Calu3 (cell line): ENCODE measurements at regions of chr19 and their contacts with region 1.

Region 1: GRCh38 chr19:51259348-51260245 is 8.7 kb downstream of the SIGLECL1 start:
- DNase-seq: peak; percentile 75
- H3K4me3 Mint-ChIP-seq: no peak overlapping the region
- H3K27ac Mint-ChIP-seq: no peak overlapping the region
- H3K4me1 Mint-ChIP-seq: no peaks in the 10 kb centered on the region
- H3K27me3 Mint-ChIP-seq: peaks cover 64% of the 10 kb centered on the region
- CTCF ChIP-seq: peak; percentile 75

Region 2: DNA sequence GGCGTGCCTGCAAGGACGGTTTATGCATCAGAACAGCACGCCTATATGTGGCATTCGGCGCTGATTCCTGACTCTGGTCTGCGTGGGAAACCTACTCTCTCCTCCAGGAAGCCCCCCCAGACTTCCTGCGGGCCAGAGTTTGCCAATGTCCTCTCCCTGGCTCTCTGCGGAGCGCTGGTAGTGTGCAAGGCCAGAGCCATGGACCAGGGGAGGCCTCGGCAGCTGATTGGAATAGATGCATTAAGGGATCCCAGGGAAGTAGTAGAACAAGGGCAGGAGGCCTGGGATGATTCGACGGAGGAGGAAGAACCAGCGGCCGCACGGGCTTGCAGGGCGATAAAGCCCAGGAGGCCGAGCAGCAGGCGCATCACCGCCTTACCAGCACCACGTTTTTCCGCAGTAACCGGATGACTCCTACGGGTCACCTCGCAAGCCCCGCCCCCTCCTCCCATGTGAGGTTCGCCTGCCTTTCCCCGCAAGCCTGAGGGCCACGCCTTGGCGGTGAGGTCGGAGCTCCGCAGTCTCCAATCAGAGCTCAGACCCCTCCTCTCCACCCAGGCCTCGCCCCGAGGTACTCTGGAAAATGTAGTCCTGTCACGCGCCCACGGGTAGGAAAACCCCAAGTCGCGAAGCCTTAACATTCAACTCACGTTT is 531.4 kb before region 1 on chr19:
- CTCF ChIA-PET with region 1: no interaction called
- intact Hi-C with region 1: no loop called
- DNase-seq: no peak
- H3K4me3 Mint-ChIP-seq: no peak overlapping the region
- H3K27ac Mint-ChIP-seq: no peak overlapping the region
- H3K4me1 Mint-ChIP-seq: no peaks in the 10 kb centered on the region
- H3K27me3 Mint-ChIP-seq: peaks cover 63% of the 10 kb centered on the region
- CTCF ChIP-seq: no peak

Region 3: DNA sequence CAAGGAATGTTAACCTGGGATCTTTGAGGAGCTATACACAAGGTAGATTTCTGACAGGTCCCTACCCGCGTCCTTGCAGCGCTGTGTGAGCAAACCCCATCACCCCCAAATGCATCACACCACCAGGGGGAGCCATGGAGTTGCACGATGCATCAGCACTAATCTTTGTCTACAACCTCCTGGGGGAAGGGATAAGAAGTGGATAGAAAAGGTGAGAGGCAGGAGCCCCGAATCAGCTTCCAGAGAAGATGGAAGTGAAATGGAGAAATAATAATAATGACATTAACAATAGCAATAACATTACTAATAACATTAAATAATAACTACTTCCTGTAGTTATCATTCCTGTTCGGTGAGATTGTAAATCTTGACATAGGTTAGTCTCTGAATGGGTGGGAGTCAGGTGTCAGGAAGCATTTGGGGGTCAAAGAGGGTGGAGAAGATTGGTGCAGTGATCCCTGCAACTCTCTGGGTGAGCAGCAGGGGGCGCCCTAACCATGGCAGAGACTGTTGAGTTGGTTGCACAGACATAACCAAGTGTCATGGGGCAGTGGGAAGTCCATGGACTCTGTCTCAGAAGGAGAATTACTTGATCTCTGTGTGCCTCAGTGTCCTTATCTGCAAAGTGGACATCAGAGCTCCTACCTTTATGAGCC is 101.0 kb before region 1 on chr19:
- CTCF ChIA-PET with region 1: interaction called, 21 read pairs
- intact Hi-C with region 1: loop called (anchors 1 kb)
- DNase-seq: peak; percentile 88
- H3K4me3 Mint-ChIP-seq: no peak overlapping the region
- H3K27ac Mint-ChIP-seq: no peak overlapping the region
- H3K4me1 Mint-ChIP-seq: no peaks in the 10 kb centered on the region
- H3K27me3 Mint-ChIP-seq: peaks cover 100% of the 10 kb centered on the region
- CTCF ChIP-seq: peak; percentile 83

Region 4: GRCh38 chr19:51194527-51195317 is 64.9 kb before region 1 on chr19:
- CTCF ChIA-PET with region 1: interaction called, 4 read pairs
- intact Hi-C with region 1: loop called (anchors 1 kb)
- DNase-seq: peak; percentile 24
- H3K4me3 Mint-ChIP-seq: no peak overlapping the region
- H3K27ac Mint-ChIP-seq: no peak overlapping the region
- H3K4me1 Mint-ChIP-seq: peaks cover 13% of the 10 kb centered on the region
- H3K27me3 Mint-ChIP-seq: peaks cover 83% of the 10 kb centered on the region
- CTCF ChIP-seq: no peak

Region 5: GRCh38 chr19:51246164-51246552 is 13.4 kb before region 1 on chr19:
- CTCF ChIA-PET with region 1: interaction called, 11 read pairs
- intact Hi-C with region 1: no loop called
- DNase-seq: peak; percentile 57
- H3K4me3 Mint-ChIP-seq: no peak overlapping the region
- H3K27ac Mint-ChIP-seq: no peak overlapping the region
- H3K4me1 Mint-ChIP-seq: peaks cover 23% of the 10 kb centered on the region
- H3K27me3 Mint-ChIP-seq: no peaks in the 10 kb centered on the region
- CTCF ChIP-seq: no peak

Region 6: GRCh38 chr19:51333836-51334460 is 74.4 kb after region 1 on chr19:
- CTCF ChIA-PET with region 1: no interaction called
- intact Hi-C with region 1: no loop called
- DNase-seq: no peak
- H3K4me3 Mint-ChIP-seq: no peak overlapping the region
- H3K27ac Mint-ChIP-seq: no peak overlapping the region
- H3K4me1 Mint-ChIP-seq: no peaks in the 10 kb centered on the region
- H3K27me3 Mint-ChIP-seq: no peaks in the 10 kb centered on the region
- CTCF ChIP-seq: no peak